Panc1 (cell line): ENCODE measurements at regions of chr6 and their contacts with region 1.

Region 1: GRCh38 chr6:85360794-85361642 is 88.9 kb upstream of the NT5E start:
- DNase-seq: peak; percentile 87
- ATAC-seq: peak; percentile 92
- H3K4me3 ChIP-seq: no peak overlapping the region
- H3K27ac ChIP-seq: no peak overlapping the region
- H3K4me1 ChIP-seq: no peaks in the 10 kb centered on the region; the same call in none of the 2 replicates
- H3K27me3 ChIP-seq: no peaks in the 10 kb centered on the region
- CTCF ChIP-seq: no peak

Region 2: DNA sequence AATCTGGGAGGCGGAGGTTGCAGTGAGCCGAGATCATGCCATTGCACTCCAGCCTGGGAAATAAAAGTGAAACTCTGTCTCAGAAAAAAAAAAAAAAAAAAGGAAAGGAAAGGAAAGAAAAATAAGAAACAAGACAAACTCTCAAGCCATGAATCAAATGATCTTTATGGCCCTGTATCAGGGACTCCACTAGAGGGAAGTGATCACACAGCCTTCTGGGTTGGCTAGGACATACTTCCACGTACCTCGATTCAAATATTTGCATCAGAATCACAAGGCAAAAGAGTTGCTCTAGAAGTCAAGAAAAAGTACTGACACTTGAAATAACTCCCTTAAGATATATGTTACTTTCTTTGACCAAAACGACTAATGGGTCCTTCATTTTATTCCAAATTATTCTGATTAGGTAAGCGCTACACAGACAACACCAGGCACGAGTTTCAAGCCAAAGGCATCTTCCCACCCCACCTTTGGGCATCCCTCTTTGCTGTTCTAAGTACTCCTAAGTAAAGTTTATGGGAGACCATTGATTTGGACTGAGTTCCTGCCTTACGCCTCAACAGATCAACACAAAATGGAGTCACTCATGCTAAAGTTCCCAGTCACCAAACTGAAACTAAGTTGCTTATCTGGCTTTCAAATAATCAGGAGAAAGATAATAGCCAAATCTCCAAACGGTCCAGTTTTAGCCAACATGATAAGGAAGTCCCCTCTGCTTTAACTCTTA is 11.3 kb after region 1 on chr6:
- CTCF ChIA-PET with region 1: no interaction called
- POLR2A ChIA-PET with region 1: interaction called, 20 read pairs
- in situ Hi-C with region 1: no loop called
- intact Hi-C with region 1: no loop called
- DNase-seq: no peak
- ATAC-seq: no peak
- H3K4me3 ChIP-seq: no peak overlapping the region
- H3K27ac ChIP-seq: no peak overlapping the region
- H3K4me1 ChIP-seq: no peaks in the 10 kb centered on the region
- H3K27me3 ChIP-seq: no peaks in the 10 kb centered on the region
- CTCF ChIP-seq: peak; percentile 25; the same call in 1 of the 2 replicates